BJ (cell line): ENCODE measurements at regions of chr1 and their contacts with region 1.

Region 1: DNA sequence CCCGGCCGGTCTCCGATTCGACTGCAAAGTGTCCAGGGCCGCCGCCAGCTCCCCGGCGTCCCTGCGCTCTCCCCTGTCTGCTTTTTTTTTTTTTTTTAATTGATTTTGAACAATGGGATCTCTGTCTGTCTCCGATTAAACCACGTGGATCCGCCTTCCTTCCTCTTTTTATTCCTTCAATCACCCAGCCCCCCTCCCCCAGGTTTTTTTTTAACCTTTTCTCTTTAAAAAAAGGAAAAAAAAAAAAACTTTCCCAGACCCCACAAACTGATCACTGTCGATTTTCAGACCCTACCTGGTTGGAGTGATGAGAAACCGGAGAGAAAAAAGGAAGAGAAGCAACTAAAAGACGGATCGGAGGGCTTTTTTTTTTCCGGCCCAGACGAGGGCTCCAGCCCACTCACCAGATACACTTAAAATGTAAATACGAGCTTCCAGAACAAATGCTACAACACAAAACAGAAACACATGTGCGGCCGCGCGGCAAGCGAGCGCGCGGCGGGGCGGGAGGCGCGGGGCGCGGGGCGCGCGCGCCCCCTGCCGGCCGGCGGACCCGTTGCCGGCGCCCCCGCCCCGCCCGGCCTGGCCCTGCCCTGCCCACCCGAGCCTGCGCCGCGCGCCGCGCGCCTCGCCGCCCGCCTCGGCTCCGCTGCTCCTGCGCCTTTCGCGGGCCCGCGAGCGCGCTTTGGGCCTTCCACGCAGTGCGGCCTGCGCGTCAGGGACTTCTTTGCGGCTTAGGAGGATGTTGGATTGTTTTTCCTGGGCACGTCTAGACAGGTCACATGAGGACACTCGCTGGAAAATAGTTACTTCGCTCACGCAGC is at the start of gene RCC2:
- DNase-seq: peak; percentile 19
- H3K4me3 ChIP-seq: peak within 1 kb of the TSS; percentile 73
- H3K27me3 ChIP-seq: no peaks in the 10 kb centered on the region
- CTCF ChIP-seq: no peak
- polyA plus RNA-seq, gene RCC2: 32.9 and 42.2 TPM in 2 replicates

Region 2: DNA sequence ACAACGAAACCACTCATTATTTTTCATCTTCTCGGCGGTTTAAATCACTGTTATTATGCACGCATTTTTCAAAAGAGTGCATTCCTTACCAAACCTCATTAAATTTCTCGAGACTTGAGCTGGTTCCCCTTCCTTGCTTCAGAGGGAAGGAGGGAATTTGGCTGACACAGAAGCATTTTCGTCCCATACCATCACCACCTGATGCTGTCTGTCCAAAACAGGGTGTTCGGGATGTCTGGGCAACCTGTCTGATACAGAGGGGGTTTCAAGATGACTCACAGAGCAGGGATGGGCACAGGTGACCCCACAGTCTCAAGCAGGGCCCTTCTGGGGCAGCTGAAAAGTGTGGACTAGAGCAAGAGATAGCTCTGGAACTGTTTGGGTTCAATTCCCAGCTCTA is 12.3 kb after region 1 on chr1:
- CTCF ChIA-PET with region 1: interaction called, 10 read pairs
- POLR2A ChIA-PET with region 1: no interaction called
- DNase-seq: no peak
- H3K4me3 ChIP-seq: no peak overlapping the region
- H3K27me3 ChIP-seq: no peaks in the 10 kb centered on the region
- CTCF ChIP-seq: no peak

Region 3: GRCh38 chr1:17462677-17463076 is 23.2 kb after region 1 on chr1:
- CTCF ChIA-PET with region 1: no interaction called
- POLR2A ChIA-PET with region 1: interaction called, 21 read pairs
- DNase-seq: no peak
- H3K4me3 ChIP-seq: no peak overlapping the region
- H3K27me3 ChIP-seq: peaks cover 2% of the 10 kb centered on the region; the same call in 1 of the 2 replicates
- CTCF ChIP-seq: no peak

Region 4: DNA sequence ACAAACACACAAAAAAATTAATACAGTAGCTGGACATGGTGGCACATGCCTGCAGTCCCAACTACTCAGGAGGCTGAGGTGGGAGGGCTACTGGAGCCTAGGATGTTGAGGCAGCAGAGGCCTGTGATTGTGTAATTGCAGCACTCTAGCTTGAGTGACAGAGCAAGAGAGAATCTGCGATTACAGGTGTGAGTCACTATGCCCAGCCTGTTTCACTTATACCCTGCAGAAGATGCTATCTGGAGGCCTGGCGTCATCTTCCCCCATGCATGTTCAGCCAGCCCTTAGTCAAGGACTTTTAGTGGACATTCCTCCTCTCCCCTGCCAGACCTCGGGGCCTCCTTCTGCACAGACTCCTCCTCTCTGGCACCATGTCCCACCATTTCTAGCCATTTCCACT is 36.3 kb after region 1 on chr1:
- CTCF ChIA-PET with region 1: interaction called, 11 read pairs
- POLR2A ChIA-PET with region 1: no interaction called
- DNase-seq: peak; percentile 55
- H3K4me3 ChIP-seq: no peak overlapping the region
- H3K27me3 ChIP-seq: no peaks in the 10 kb centered on the region
- CTCF ChIP-seq: no peak

Region 5: GRCh38 chr1:17732475-17732874 is 293.0 kb after region 1 on chr1:
- CTCF ChIA-PET with region 1: no interaction called
- POLR2A ChIA-PET with region 1: no interaction called
- DNase-seq: no peak
- H3K4me3 ChIP-seq: no peak overlapping the region
- H3K27me3 ChIP-seq: no peaks in the 10 kb centered on the region
- CTCF ChIP-seq: no peak